ENCODE measurements at regions of chr13 and their contacts with region 1.

Region 1: DNA sequence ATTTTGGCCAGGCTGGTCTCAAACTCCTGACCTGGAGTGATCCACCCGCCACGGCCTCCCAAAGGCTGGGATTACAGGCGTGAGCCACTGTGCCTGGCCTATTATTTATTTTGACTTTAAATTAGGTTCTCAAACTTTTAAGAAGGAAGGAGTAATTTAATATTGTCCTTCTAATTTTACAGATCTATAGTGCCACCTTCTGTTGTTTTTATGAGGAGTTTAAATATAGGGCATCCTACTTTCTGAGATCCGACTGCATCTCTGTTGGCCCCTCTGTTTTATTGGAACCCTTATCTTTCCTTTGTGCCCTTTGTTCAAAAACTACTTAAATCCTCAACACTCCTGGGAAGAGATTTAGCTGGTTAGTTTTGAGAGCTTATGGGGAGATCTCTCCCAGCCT is 25.4 kb upstream of the ZMYM5 start:
- DNase-seq: peak; percentile 43
- H3K4me3 ChIP-seq: no peak overlapping the region
- H3K27ac ChIP-seq: no peak overlapping the region
- H3K4me1 ChIP-seq: no peaks in the 10 kb centered on the region
- H3K27me3 ChIP-seq: no peaks in the 10 kb centered on the region
- CTCF ChIP-seq: peak; percentile 36; the same call in 1 of the 2 replicates

Region 2: GRCh38 chr13:19123502-19123901 is 765.3 kb before region 1 on chr13:
- CTCF ChIA-PET with region 1: no interaction called
- POLR2A ChIA-PET with region 1: no interaction called
- intact Hi-C with region 1: no loop called
- DNase-seq: no peak
- H3K4me3 ChIP-seq: no peak overlapping the region
- H3K27ac ChIP-seq: no peak overlapping the region
- H3K4me1 ChIP-seq: no peaks in the 10 kb centered on the region
- H3K27me3 ChIP-seq: no peaks in the 10 kb centered on the region
- CTCF ChIP-seq: no peak

Region 3: DNA sequence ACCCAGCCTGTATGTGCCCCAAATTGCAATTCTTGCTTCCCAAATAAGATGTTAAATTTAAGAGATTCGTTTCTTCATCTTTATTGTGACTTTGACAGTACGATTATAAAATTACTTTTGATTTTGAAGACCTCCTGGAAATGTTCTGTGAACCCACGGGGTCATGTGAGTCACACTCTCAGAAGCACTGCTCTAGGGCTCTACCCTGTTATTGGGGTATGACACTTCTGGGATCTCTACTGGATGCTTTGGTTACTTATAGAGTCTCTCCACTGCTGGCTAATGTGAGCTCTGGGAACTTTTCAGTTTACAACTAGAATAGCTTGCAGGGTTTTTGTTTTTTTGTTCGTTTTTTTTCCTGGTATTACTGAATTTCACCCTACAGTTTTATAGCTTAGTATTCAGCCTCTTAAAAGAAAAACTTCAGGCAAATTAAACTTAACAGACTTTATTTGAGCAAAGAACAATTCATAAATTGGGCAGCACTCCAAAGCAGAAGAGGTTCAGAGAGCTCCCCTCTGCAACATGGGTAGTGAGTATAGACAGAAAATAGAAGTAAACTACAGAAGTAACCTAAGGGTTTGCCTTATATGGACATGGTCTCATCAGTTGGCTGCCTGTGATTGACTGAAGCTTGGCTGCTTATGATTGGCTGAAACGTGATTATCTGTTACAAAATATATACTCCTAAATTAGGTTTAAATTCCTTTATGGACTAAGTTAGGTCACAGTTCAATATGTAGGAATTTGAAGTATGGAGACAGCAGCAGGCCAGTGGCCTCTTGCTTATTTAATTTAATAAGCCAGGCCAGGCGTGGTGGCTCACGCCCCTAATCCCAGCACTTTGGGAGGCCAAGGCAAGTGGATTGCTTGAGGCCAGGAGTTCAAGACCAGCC is 77.6 kb before region 1 on chr13:
- CTCF ChIA-PET with region 1: no interaction called
- POLR2A ChIA-PET with region 1: interaction called, 11 read pairs
- intact Hi-C with region 1: no loop called
- DNase-seq: no peak
- H3K4me3 ChIP-seq: no peak overlapping the region
- H3K27ac ChIP-seq: no peak overlapping the region
- H3K4me1 ChIP-seq: no peaks in the 10 kb centered on the region
- H3K27me3 ChIP-seq: no peaks in the 10 kb centered on the region
- CTCF ChIP-seq: no peak

Measured in A673 (cell line).